ENCODE measurements at regions of chr5 and their contacts with region 1.

Region 1: DNA sequence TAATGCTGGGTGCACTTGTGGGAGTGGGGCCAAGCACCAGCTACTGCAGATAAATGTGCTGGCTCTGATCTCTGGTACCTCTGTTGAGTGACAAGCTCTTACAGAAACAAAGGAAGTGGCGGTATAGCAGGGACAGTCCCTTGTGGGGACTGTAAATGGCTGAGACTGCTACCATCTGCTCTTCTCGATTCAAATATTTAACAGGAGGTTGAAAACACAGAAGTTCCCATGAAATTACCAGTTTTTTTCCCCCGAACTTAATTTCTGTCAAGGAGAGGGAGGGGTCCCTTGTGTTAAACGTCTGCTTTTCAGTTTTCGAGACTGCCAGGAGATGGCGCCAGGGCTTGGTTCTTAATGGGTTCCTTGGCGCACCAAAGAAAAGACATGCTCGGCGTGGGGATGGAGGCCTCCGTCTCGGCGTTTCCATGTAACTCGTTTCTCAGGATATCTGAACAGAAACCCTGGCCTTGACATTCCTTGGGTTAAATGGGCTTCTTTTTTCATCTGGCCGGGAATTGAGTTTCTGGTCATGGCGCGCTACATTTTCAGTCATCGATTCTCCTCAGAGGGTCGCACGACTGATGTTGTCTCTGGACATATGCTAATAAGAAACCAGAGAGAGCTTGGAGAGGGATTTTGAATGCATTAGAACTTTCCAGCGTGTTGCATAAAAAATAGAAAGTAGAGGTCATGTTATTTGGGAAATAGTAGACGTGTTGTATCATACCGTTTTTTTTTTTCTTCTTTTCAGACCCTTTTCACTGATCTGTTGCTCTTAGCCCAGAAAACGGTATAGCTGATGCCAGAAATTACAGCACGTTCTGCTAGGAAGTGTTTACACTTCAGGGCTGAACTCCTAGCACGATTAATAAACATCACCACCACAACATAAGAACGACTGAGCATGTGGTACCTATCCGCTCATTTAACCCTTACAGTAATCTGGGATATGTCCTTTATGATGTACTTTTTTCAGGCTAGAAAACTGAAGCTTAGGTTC is 64.0 kb downstream of the CARTPT start:
- DNase-seq: peak; percentile 76 to 84
- ATAC-seq: peak; percentile 83 to 92 (median 85)
- H3K4me3 ChIP-seq: peak overlapping the region in 8 of 10 donors; percentile 1 to 37 (median 32)
- H3K27ac ChIP-seq: peak overlapping the region in 6 of 10 donors; percentile 4 to 43 (median 30)
- H3K4me1 ChIP-seq: peaks cover 0 to 16% (median 5%) of the 10 kb centered on the region in 9 donors
- H3K27me3 ChIP-seq: no peaks in the 10 kb centered on the region
- CTCF ChIP-seq: peak; percentile 60 to 88 (median 80)

Region 2: DNA sequence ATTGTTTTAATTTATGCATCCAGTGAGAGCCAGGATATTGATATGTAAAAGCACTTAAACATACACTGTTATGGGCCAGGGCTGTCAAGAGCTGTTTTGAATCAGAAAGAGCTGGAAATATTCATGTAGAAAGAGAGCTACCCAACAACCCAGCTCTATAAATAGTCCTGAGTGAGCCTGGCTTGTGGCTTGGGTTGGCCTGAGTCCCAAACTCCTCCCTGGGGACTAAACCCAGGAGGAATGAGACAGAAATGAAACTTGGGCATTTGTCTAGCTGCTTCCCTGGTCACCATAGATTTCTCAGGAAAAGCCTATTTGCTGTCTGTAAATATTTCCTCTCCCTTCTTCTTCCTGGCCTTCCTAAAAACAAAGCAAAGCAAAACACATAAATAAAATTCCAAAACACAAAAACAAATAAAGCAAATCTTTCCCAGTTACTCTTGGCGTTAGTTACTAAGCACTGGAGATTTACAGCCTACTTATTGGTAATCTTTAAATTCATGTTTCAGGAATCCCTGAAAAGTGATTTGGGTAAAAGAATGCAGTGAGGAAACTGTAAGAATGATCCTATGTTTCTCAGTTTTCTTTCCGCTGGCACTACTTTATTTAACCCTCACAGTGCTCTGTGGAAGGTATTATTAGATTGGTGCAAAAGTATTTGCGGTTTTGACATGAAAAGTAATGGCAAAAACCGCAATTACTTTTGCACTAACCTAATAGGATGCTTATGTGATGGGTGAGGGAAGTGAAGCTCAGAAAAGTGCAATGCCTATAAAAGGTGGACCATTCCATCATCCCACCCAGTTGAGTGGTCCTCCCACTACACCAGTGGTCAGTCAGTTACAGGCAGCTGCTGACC is 47.8 kb after region 1 on chr5:
- intact Hi-C with region 1: loop called in 1 of 10 experiments (anchors 2 kb)
- DNase-seq: peak; percentile 80
- ATAC-seq: peak; percentile 83 to 98 (median 91)
- H3K4me3 ChIP-seq: no peak overlapping the region
- H3K27ac ChIP-seq: peak overlapping the region; percentile 28 to 85 (median 64)
- H3K4me1 ChIP-seq: peaks cover 0 to 25% (median 15%) of the 10 kb centered on the region in 9 donors
- H3K27me3 ChIP-seq: no peaks in the 10 kb centered on the region
- CTCF ChIP-seq: no peak

Region 3: GRCh38 chr5:71974165-71974564 is 191.1 kb after region 1 on chr5:
- intact Hi-C with region 1: loop called in 1 of 10 experiments (anchors 10 kb)
- DNase-seq: peak in 1 of 2 donors; percentile 11
- ATAC-seq: peak in 7 of 8 donors; percentile 28 to 82 (median 58)
- H3K4me3 ChIP-seq: no peak overlapping the region
- H3K27ac ChIP-seq: peak overlapping the region; percentile 39 to 71 (median 58)
- H3K4me1 ChIP-seq: peaks cover 0 to 24% (median 15%) of the 10 kb centered on the region in 9 donors
- H3K27me3 ChIP-seq: no peaks in the 10 kb centered on the region
- CTCF ChIP-seq: no peak

Region 4: DNA sequence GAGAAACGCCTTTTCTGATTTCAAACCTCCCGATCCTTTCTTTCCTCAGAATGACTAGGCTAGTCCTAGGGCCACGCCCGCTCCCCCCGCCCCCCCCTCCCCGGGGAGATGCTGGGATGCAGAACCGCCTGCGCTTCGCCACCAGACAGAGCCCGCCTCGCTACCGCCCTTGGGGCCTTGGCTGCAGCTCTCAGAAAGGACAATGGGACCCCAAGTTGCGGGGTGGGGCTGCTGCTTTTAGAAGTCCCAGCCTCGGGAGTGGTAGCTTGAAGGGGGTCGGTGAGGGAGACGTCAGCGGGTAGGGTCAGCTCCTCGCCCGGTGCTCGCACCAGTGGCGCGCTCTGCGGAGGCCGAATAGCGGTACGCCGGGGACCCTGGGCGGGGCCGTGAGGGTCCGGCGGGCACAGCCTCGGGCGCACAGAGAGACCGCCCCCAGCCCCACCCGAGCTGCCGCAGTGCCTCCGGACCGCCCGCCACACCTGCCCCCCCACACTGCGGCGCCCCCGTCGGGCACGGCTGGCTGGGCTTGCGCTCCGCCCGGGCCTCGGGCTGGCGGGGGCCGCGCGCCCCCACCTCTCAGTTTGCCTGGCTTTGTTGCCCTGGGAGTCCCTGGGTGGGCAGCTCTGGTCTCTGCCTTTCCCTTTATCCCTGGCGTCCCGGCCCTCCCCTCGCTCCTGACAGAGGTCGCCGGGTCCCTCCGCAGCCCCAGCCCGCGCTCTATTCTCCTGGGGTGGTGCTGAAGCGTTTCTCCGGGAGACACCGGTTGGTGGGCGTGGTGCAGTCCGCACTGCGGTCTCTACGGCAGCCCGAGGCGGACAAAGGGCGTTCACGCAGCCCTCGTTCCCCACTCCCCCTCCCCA is 325.4 kb after region 1 on chr5:
- intact Hi-C with region 1: loop called in 8 of 10 experiments (anchors 2 to 10 kb)
- DNase-seq: peak; percentile 82 to 86
- ATAC-seq: peak; percentile 78 to 87 (median 80)
- H3K4me3 ChIP-seq: peak overlapping the region; percentile 74 to 96 (median 86)
- H3K27ac ChIP-seq: peak overlapping the region; percentile 81 to 94 (median 88)
- H3K4me1 ChIP-seq: peaks cover 0 to 49% (median 18%) of the 10 kb centered on the region in 9 donors
- H3K27me3 ChIP-seq: peaks cover 0 to 60% (median 0%) of the 10 kb centered on the region in 7 donors
- CTCF ChIP-seq: no peak

Region 5: GRCh38 chr5:72314571-72315172 is 531.6 kb after region 1 on chr5:
- intact Hi-C with region 1: loop called in 9 of 10 experiments (anchors 2 to 10 kb)
- DNase-seq: peak in 1 of 2 donors; percentile 63
- ATAC-seq: peak in 7 of 8 donors; percentile 60 to 80 (median 75)
- H3K4me3 ChIP-seq: no peak overlapping the region
- H3K27ac ChIP-seq: no peak overlapping the region
- H3K4me1 ChIP-seq: peaks cover 0 to 31% (median 21%) of the 10 kb centered on the region in 9 donors
- H3K27me3 ChIP-seq: no peaks in the 10 kb centered on the region
- CTCF ChIP-seq: peak in 5 of 9 donors; percentile 17 to 42 (median 37)